Vagina (tissue), 2 donors: ENCODE measurements at regions of chr4 and their contacts with region 1.

Region 1: GRCh38 chr4:163505374-163505773 is 10.9 kb downstream of the TMA16 start:
- DNase-seq: no peak
- H3K4me3 ChIP-seq: no peak overlapping the region
- H3K27ac ChIP-seq: no peak overlapping the region
- H3K4me1 ChIP-seq: peaks cover 13% of the 10 kb centered on the region
- H3K27me3 ChIP-seq: no peaks in the 10 kb centered on the region
- CTCF ChIP-seq: no peak
- POLR2A ChIP-seq: no peak

Region 2: DNA sequence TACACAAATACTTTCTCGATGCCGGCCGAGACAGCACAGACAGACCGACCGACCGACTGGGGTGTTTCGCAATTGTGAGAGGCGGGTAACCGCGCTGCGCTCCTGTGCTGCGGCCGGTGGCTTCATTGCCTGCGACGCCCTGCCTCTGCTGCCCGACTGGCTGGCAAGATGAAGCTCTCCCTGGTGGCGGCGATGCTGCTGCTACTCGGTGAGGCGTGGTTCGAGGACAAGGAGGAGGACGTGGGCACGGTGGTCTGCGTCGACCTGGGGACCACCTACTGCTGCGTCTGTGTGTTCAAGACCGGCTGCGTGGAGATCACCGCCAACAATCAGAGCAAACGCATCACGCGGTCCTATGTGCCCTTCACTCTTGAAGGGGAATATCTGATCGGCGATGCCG is 682.8 kb after region 1 on chr4:
- intact Hi-C with region 1: no loop called
- DNase-seq: no peak
- H3K4me3 ChIP-seq: no peak overlapping the region
- H3K27ac ChIP-seq: no peak overlapping the region
- H3K4me1 ChIP-seq: no peaks in the 10 kb centered on the region
- H3K27me3 ChIP-seq: no peaks in the 10 kb centered on the region
- CTCF ChIP-seq: no peak
- POLR2A ChIP-seq: no peak

Region 3: DNA sequence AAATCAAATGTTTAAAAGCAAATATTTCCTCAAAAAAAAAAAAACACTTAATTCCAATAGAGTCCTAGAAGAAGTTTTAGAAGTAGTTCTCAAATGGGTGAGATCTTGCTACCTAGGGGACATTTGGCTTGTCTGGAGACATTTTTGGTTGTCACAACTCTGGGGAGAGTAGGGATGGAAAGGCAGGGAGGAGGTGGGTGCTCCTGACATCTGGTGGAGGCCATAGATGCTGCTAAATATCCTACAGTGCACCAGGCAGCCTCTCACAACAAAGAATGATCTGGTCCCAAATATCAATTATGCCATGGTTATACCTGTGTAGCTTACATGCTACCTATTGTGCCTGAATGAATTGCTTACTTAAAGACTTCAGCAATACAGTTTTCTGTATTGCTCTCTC is 1920.3 kb after region 1 on chr4:
- intact Hi-C with region 1: loop called (anchors 5 kb)
- DNase-seq: no peak
- H3K4me3 ChIP-seq: no peak overlapping the region
- H3K27ac ChIP-seq: no peak overlapping the region
- H3K4me1 ChIP-seq: no peaks in the 10 kb centered on the region
- H3K27me3 ChIP-seq: no peaks in the 10 kb centered on the region
- CTCF ChIP-seq: no peak
- POLR2A ChIP-seq: no peak